Activated T-helper 2 cell treated with anti-CD3 and anti-CD28 coated beads, Interferon-gamma antibody, Interleukin-2, Interleukin-4, amounts not matched to agents 10 μg/mL and 5 μg/mL and 100 μg/mL, durations not matched to agents 14 hours and 24 hours and 36 hours (primary cell): ENCODE measurements at regions of chr3 and their contacts with region 1.

Region 1: GRCh38 chr3:46558184-46559043 is 7.7 kb downstream of the LRRC2 start:
- DNase-seq: peak; percentile 61
- H3K4me3 Mint-ChIP-seq: peak overlapping the region; percentile 76
- H3K27ac Mint-ChIP-seq: no peak overlapping the region
- H3K4me1 Mint-ChIP-seq: peaks cover 9% of the 10 kb centered on the region
- H3K27me3 Mint-ChIP-seq: peaks cover 52% of the 10 kb centered on the region

Region 2: GRCh38 chr3:46349485-46350261 is 208.7 kb before region 1 on chr3:
- intact Hi-C with region 1: no loop called
- DNase-seq: no peak
- H3K4me3 Mint-ChIP-seq: peak overlapping the region; percentile 43
- H3K27ac Mint-ChIP-seq: peak overlapping the region; percentile 71
- H3K4me1 Mint-ChIP-seq: peaks cover 62% of the 10 kb centered on the region
- H3K27me3 Mint-ChIP-seq: peaks cover 39% of the 10 kb centered on the region

Region 3: DNA sequence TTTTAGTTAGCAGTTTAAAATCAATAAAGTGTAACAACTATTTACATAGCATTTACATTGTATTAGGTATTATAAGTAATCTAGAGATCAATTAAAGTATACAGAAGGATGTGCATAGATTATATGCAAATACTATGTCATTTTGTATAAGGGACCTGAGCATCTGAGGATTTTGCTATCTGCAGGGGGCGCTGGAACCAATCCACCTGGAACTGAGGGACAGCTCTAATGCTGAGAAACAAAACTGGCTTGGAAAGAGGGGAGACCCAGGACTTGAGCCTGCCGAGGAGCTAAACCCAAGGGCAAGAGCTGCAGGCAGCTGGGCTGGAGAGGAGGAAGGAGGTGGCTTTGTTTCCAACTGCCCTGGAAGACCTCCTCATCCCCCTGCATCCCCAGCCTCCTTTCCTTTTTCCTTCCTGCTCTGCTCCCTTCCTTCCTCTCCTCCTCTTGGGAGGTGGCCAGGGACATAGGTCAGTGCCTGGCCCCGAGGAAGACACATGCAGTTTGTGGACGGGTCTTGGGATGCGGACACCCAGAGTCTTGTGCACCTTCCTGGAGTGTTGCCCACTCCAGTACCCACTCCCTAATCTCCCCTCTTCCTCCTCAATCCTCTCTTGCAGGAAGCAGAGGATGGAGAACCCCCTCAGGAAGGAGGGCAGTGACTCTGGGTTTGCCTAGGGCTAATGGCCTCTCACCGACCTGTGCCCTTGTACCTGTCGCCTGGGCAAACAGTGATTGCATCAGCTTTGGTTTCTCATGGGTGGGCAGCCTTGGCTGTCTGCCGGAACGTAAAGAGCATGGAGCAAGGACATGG is 61.5 kb before region 1 on chr3:
- intact Hi-C with region 1: loop called (anchors 2 kb)
- DNase-seq: peak; percentile 20
- H3K4me3 Mint-ChIP-seq: no peak overlapping the region
- H3K27ac Mint-ChIP-seq: no peak overlapping the region
- H3K4me1 Mint-ChIP-seq: peaks cover 2% of the 10 kb centered on the region
- H3K27me3 Mint-ChIP-seq: peaks cover 13% of the 10 kb centered on the region